CD4-positive, alpha-beta T cell (primary cell): ENCODE measurements at regions of chr19 and their contacts with region 1.

Region 1: DNA sequence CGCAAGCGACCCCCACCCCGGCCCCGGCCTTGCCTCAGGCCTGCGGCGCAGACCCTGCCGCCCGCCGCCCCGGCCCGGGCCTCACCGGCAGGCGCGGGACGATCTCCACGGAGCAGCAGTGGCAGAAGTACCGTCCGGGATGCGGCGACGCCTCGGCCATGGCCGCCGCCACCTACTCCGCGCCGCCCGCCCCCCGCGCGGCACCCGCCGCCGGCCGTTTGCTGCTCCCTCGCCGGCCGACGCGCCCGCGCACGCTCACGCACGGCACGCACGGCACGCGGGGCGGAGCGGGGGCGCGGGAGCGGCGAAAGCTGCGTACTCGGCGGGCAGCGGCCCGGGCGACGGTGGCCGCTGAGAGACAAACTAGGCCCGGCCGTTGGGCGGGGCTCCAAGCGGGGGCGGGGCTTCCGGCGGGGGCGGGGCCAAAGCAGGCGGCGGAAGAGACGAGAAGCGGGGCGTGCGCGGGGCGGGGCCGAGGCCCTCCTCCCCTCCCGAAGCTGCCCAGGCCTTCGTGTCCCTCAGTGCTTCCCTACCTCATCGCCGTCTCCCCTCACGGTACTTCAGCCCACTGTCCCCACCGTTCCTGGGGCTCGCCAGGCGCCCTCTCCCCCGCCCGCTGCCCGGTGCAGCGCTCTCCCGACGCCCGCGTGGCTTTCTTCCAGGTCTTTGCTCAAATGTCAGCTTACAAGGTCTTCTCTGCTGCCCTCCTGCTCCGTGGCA is at the start of gene RNF126:
- DNase-seq: peak; percentile 84 to 98 (median 95)
- ATAC-seq: peak; percentile 33
- H3K4me3 ChIP-seq: peak within 1 kb of the TSS; percentile 97
- H3K4me3 Mint-ChIP-seq: peak within 1 kb of the TSS; percentile 97
- H3K27ac ChIP-seq: peak within 1 kb of the TSS; percentile 92 to 97
- H3K27ac Mint-ChIP-seq: peak within 1 kb of the TSS; percentile 97
- H3K4me1 ChIP-seq: peaks cover 59% of the 10 kb centered on the region
- H3K4me1 Mint-ChIP-seq: peaks cover 40% of the 10 kb centered on the region
- H3K27me3 ChIP-seq: no peaks in the 10 kb centered on the region
- H3K27me3 Mint-ChIP-seq: no peaks in the 10 kb centered on the region
- CTCF ChIP-seq: no peak
- total RNA-seq, gene RNF126: 112 to 119 TPM

Region 2: DNA sequence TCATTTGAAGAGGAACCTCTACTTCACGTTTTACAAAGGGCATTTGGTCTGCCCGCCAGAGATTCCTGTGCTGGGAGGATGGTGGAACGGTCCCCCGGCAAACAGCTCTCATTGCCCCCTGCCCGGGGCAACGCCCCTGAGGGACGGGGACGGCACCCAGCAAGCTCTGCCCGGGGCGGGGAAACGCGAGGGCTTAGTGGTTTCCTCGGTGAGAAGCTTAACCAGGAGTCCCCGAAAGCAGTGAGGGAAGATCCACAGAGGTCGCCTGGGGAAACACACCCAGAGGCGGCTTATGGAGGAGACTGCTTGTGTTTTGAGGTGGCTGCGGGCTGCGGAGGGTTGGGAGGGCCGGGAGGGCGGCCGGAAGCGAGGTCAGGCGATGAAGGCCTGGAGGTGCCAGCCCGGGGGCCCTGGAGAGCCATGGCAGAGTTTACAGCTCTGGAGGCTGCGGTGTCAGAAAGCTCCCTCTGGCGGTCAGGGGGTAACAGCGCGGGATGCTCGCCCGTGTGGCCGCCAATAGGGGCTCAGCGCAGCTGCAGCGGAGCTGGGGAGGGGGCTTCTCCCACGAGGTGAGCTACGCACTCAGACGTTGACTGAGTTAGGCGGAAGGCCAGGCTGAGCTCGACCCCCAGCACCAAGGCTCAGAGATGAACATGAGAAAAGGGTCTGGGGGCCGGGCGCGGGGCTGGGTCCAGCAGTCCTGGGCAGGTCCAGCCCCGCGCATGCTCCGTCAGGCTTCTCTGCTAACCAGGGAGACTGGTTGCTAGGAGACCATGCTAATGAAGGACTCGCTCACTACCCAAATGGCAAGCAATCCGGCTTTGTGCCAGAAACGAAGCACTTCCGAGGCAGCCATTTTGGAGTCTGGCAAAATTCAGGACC is 156.5 kb before region 1 on chr19:
- CTCF ChIA-PET with region 1: interaction called, 6 read pairs
- POLR2A ChIA-PET with region 1: interaction called, 13 read pairs
- intact Hi-C with region 1: loop called in 1 of 2 experiments (anchors 1 kb)
- DNase-seq: peak; percentile 85 to 98 (median 92)
- ATAC-seq: peak; percentile 52
- H3K4me3 ChIP-seq: peak overlapping the region; percentile 91
- H3K4me3 Mint-ChIP-seq: peak overlapping the region; percentile 98
- H3K27ac ChIP-seq: peak overlapping the region; percentile 88 to 99
- H3K27ac Mint-ChIP-seq: peak overlapping the region; percentile 94
- H3K4me1 ChIP-seq: peaks cover 55% of the 10 kb centered on the region
- H3K4me1 Mint-ChIP-seq: peaks cover 37% of the 10 kb centered on the region
- H3K27me3 ChIP-seq: no peaks in the 10 kb centered on the region
- H3K27me3 Mint-ChIP-seq: no peaks in the 10 kb centered on the region
- CTCF ChIP-seq: peak; percentile 99

Region 3: GRCh38 chr19:558770-559439 is 104.2 kb before region 1 on chr19:
- CTCF ChIA-PET with region 1: no interaction called
- POLR2A ChIA-PET with region 1: no interaction called
- intact Hi-C with region 1: no loop called
- DNase-seq: no peak
- ATAC-seq: no peak
- H3K4me3 ChIP-seq: no peak overlapping the region
- H3K4me3 Mint-ChIP-seq: no peak overlapping the region
- H3K27ac ChIP-seq: no peak overlapping the region
- H3K27ac Mint-ChIP-seq: no peak overlapping the region
- H3K4me1 ChIP-seq: peaks cover 3% of the 10 kb centered on the region
- H3K4me1 Mint-ChIP-seq: no peaks in the 10 kb centered on the region
- H3K27me3 ChIP-seq: no peaks in the 10 kb centered on the region
- H3K27me3 Mint-ChIP-seq: no peaks in the 10 kb centered on the region
- CTCF ChIP-seq: no peak

Region 4: GRCh38 chr19:572140-572742 is 90.9 kb before region 1 on chr19 and contains the start of gene BSG:
- CTCF ChIA-PET with region 1: no interaction called
- POLR2A ChIA-PET with region 1: no interaction called
- intact Hi-C with region 1: loop called (anchors 2 to 5 kb)
- DNase-seq: peak; percentile 97 to 100 (median 98)
- ATAC-seq: peak; percentile 83
- H3K4me3 ChIP-seq: peak within 1 kb of the TSS; percentile 94
- H3K4me3 Mint-ChIP-seq: peak within 1 kb of the TSS; percentile 99
- H3K27ac ChIP-seq: peak within 1 kb of the TSS; percentile 69 to 87
- H3K27ac Mint-ChIP-seq: peak within 1 kb of the TSS; percentile 95
- H3K4me1 ChIP-seq: peaks cover 60% of the 10 kb centered on the region
- H3K4me1 Mint-ChIP-seq: peaks cover 40% of the 10 kb centered on the region
- H3K27me3 ChIP-seq: no peaks in the 10 kb centered on the region
- H3K27me3 Mint-ChIP-seq: no peaks in the 10 kb centered on the region
- CTCF ChIP-seq: no peak
- total RNA-seq, gene BSG: 68.7 to 71.6 TPM

Region 5: GRCh38 chr19:610801-611505 is 52.2 kb before region 1 on chr19:
- CTCF ChIA-PET with region 1: no interaction called
- POLR2A ChIA-PET with region 1: interaction called, 14 read pairs
- intact Hi-C with region 1: loop called in 1 of 2 experiments (anchors 2 kb)
- DNase-seq: peak; percentile 33 to 90 (median 56)
- ATAC-seq: peak; percentile 71
- H3K4me3 ChIP-seq: peak overlapping the region; percentile 65
- H3K4me3 Mint-ChIP-seq: peak overlapping the region; percentile 95
- H3K27ac ChIP-seq: peak overlapping the region; percentile 29 to 67
- H3K27ac Mint-ChIP-seq: peak overlapping the region; percentile 85
- H3K4me1 ChIP-seq: peaks cover 43% of the 10 kb centered on the region
- H3K4me1 Mint-ChIP-seq: peaks cover 25% of the 10 kb centered on the region
- H3K27me3 ChIP-seq: no peaks in the 10 kb centered on the region
- H3K27me3 Mint-ChIP-seq: peaks cover 3% of the 10 kb centered on the region
- CTCF ChIP-seq: no peak

Region 6: DNA sequence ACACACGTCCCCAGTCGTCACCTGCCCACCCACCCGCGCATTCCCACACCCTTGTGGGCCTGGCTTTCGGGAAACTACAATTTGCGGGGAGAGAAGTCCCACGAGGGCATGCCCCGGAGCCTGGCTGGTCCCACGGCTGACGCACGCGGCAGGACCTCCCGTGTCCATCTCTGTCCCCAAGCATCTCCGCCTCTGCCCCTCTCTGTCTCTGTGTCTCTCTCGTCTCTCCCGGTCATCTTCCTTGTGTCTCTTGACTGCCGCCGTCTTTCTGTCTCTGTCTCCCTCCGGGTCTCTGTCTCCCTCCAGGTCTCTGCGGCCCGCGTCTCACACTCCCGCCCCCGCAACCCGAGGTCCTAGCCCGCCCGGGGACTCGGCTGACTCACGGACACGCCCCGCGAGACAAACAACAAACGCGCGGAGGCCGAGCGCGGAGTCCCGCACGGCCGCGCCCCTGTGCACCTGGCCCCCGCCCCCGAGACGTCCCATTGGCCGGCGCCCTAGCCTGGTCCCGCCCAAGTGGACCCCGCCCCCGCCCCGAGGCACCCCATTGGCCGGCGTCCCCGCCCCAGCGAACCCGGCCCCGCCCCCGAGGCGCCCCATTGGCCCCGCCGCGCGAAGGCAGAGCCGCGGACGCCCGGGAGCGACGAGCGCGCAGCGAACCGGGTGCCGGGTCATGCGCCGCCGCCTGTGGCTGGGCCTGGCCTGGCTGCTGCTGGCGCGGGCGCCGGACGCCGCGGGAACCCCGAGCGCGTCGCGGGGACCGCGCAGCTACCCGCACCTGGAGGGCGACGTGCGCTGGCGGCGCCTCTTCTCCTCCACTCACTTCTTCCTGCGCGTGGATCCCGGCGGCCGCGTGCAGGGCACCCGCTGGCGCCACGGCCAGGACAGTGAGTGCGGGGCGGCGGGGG is 23.6 kb before region 1 on chr19 and contains the start of gene FGF22:
- CTCF ChIA-PET with region 1: interaction called, 6 read pairs
- POLR2A ChIA-PET with region 1: interaction called, 16 read pairs
- intact Hi-C with region 1: loop called in 1 of 2 experiments (anchors 1 kb)
- DNase-seq: peak; percentile 93 to 99 (median 96)
- ATAC-seq: peak; percentile 96
- H3K4me3 ChIP-seq: peak within 1 kb of the TSS; percentile 53
- H3K4me3 Mint-ChIP-seq: peak within 1 kb of the TSS; percentile 84
- H3K27ac ChIP-seq: no peak within 1 kb of the TSS
- H3K27ac Mint-ChIP-seq: peak within 1 kb of the TSS; percentile 88
- H3K4me1 ChIP-seq: peaks cover 25% of the 10 kb centered on the region
- H3K4me1 Mint-ChIP-seq: peaks cover 6% of the 10 kb centered on the region
- H3K27me3 ChIP-seq: no peaks in the 10 kb centered on the region
- H3K27me3 Mint-ChIP-seq: no peaks in the 10 kb centered on the region
- CTCF ChIP-seq: no peak
- total RNA-seq, gene FGF22: 0.42 to 0.49 TPM

Region 7: DNA sequence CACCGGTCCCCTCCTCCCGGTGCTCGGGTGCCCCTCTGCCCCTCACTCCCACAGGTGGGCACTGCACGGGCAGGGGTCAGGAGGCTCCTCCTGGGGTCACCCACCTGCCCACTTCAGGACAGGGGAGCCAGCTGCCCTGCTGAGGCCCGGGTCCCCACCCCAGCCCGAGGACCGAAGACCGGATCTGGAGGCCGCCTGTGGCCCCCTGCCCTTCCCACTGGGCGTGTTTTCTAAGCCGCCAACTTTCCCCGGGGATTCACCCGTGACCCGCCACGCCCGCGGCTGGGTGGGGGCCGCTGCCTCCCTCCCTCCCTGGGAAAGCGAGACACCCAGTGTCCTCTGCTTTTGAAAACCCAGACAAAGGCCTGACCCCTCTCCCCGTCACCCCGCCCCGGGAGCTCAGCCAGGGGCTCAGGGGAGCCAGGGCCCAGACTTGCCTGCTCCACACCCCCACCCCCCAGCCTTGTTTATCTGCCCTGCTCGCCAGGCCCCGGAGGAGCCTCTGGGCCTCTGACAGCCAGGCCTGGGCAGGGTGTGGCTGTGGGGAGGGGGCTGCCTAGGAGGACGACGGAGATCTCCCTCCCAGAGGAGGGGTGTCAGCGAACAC is 46.9 kb after region 1 on chr19:
- CTCF ChIA-PET with region 1: no interaction called
- POLR2A ChIA-PET with region 1: no interaction called
- intact Hi-C with region 1: no loop called
- DNase-seq: no peak
- ATAC-seq: no peak
- H3K4me3 ChIP-seq: no peak overlapping the region
- H3K4me3 Mint-ChIP-seq: no peak overlapping the region
- H3K27ac ChIP-seq: no peak overlapping the region
- H3K27ac Mint-ChIP-seq: no peak overlapping the region
- H3K4me1 ChIP-seq: peaks cover 2% of the 10 kb centered on the region
- H3K4me1 Mint-ChIP-seq: no peaks in the 10 kb centered on the region
- H3K27me3 ChIP-seq: peaks cover 25 to 33% of the 10 kb centered on the region in 2 experiments
- H3K27me3 Mint-ChIP-seq: peaks cover 35% of the 10 kb centered on the region
- CTCF ChIP-seq: no peak

Region 8: DNA sequence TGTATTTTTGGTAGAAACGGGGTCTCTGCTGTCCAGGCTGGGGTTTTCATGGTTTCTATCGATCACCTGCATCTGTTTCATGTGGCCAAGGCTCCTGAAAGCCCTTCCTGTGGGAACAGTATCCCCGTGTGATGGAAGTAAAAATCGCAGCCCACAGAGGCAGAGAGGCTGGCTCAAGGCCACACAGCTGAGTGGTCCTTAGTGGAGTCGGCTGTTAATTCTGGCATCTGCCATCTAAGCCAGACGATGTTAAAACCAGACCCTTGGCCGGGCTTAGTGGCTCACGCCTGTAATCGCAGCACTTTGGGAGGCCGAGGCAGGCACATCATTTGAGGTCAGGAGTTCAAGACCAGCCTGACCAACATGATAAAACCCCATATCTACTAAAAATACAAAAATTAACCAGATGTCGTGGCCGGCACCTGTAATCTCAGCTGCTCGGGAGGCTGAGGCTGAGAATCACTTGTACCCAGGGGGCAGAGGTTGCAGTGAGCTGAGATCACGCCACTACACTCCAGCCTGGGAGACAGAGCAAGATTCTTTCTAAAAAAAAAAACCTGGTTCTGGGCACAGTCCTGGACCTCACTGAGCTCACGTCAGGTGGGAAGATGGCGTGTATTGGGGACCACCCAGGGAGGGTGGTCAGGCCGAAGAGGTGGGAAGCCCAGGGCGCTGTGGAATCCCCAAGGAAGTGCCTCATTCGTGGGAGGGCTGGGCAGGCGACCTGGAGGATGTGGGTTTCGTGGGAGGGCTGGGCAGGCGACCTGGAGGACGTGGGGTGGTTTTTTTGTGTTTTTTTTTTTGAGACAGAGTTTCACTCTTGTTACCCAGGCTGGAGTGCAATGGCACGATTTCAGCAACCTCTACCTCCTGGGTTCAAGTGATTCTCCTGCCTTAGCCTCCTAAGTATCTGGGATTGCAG is 69.3 kb after region 1 on chr19:
- CTCF ChIA-PET with region 1: interaction called, 14 read pairs
- POLR2A ChIA-PET with region 1: interaction called, 10 read pairs
- intact Hi-C with region 1: loop called (anchors 1 kb)
- DNase-seq: peak in 1 of 14 experiments; percentile 38
- ATAC-seq: no peak
- H3K4me3 ChIP-seq: no peak overlapping the region
- H3K4me3 Mint-ChIP-seq: no peak overlapping the region
- H3K27ac ChIP-seq: no peak overlapping the region
- H3K27ac Mint-ChIP-seq: no peak overlapping the region
- H3K4me1 ChIP-seq: peaks cover 20% of the 10 kb centered on the region
- H3K4me1 Mint-ChIP-seq: peaks cover 6% of the 10 kb centered on the region
- H3K27me3 ChIP-seq: no peaks in the 10 kb centered on the region
- H3K27me3 Mint-ChIP-seq: no peaks in the 10 kb centered on the region
- CTCF ChIP-seq: no peak

Region 9: GRCh38 chr19:947265-948036 is 284.3 kb after region 1 on chr19:
- CTCF ChIA-PET with region 1: no interaction called
- POLR2A ChIA-PET with region 1: no interaction called
- intact Hi-C with region 1: no loop called
- DNase-seq: peak in 3 of 14 experiments; percentile 41 to 77 (median 69)
- ATAC-seq: no peak
- H3K4me3 ChIP-seq: no peak overlapping the region
- H3K4me3 Mint-ChIP-seq: no peak overlapping the region
- H3K27ac ChIP-seq: no peak overlapping the region
- H3K27ac Mint-ChIP-seq: no peak overlapping the region
- H3K4me1 ChIP-seq: peaks cover 5% of the 10 kb centered on the region
- H3K4me1 Mint-ChIP-seq: no peaks in the 10 kb centered on the region
- H3K27me3 ChIP-seq: no peaks in the 10 kb centered on the region
- H3K27me3 Mint-ChIP-seq: no peaks in the 10 kb centered on the region
- CTCF ChIP-seq: no peak